ENCODE measurements at regions of chr2 and their contacts with region 1.

Region 1: DNA sequence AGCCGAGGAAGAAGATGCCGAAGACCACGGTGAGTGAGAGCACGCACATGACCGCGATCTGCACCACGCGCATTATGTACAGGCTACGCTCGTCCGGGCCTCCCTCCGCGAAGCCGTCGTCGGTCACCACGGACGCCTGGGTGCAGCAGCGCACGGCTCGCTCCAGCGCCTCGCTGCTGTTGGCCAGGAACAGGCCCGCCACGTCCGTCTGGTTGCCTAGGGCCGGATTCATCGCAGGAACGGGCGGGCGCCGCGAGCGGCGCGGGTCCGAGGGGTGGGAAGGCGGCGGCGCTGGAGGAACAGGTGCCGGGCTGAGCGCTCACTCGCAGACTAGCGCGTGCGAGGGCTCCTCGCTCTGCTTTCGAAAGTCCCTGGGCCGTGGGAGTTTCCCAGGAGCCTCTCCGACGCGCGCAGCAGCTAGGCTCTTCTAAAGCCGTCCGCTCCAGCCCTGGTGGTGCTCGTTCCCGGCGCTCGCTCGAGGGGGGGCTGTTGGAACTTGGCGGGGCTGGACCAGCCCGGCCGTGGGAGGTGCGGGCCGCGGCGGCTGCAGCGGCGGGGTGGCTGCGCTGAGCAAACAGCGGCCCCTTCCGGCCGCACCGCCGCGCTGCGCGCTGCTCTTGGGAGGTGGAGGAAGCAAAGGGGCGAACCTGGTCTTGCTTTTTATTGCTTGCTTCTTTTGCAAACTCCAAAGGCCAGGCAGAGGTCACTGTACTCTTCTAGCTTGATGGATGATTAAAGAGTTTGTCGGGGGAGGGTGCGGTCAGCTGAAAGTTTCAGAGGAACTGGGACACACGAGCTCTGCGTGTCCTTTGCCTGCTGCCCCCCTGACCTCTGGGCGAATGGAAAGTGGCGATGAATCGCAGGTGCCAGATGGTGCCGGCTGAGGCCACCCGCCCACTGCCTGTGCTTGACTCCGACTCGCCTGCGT is at the start of gene RPRM:
- DNase-seq: peak; percentile 93
- H3K4me3 ChIP-seq: peak within 1 kb of the TSS; percentile 56 to 68 (median 60)
- H3K27ac ChIP-seq: peak within 1 kb of the TSS; percentile 79 to 82 (median 80)
- H3K4me1 ChIP-seq: peaks cover 0 to 45% (median 33%) of the 10 kb centered on the region in 4 donors
- H3K27me3 ChIP-seq: peaks cover 0 to 4% (median 0%) of the 10 kb centered on the region in 3 donors
- CTCF ChIP-seq: peak; percentile 28 to 85 (median 72)
- EP300 ChIP-seq: no peak
- POLR2A ChIP-seq: no peak
- total RNA-seq, gene RPRM: 17.4 to 35.7 (median 27.3) TPM

Region 2: DNA sequence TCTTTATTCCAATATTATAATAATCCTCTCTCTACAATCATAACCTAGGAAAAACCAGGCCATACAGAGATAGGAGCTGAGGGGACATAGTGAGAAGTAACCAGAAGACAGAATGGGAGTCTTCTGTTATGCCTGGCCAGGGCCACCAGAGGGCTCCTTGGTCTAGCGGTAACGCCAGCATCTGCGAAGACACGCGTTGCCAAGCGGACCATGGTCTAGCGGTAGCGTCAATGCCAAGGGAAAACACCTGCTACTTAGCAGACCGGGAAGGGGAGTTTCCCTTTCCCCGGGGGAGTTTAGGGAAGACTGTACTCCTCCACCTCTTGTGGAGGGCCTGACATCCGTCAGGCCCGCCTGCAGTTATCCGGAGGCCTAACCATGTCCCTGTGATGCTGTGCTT is 723.6 kb before region 1 on chr2:
- intact Hi-C with region 1: loop called (anchors 5 kb)
- DNase-seq: no peak
- H3K4me3 ChIP-seq: no peak overlapping the region
- H3K27ac ChIP-seq: no peak overlapping the region
- H3K4me1 ChIP-seq: no peaks in the 10 kb centered on the region
- H3K27me3 ChIP-seq: no peaks in the 10 kb centered on the region
- CTCF ChIP-seq: peak in 2 of 4 experiments; percentile 24 to 38
- EP300 ChIP-seq: no peak
- POLR2A ChIP-seq: no peak

Region 3: DNA sequence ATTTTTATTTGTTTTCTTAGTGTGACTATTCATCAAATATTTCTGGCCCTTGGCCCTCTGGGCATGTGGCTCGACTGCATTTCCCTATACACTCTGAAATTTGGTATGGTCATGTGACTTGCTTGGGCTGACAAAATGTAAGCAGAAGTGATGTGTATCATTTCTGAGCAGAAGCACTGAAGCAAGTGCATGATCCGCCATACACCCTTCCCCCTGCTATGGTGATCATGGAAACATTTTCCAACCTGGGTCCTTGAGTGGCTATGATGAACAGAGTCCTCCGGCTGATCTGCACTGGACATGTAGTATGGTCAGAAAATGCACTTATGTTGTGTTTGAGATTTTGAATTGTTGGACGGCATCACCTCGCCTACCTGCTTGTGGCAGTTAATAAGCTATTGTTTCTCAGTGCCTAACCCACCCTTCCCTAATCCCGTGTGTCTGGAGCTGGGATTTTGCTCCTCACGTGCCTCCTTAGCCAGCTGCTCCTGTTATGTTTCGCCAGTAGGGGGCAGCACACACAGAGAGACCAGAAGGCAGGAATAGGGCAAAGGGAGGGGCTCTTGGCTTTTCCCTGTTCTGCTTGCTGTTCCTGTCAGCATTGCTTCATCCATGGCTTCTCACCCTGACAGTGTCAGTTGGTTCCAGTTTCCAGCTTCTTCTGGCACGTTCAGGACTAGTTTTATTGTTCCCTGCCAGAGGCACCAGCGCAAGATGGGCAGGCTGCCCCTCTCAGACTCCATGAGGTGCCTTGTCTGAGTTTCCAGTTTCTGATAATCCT is 552.9 kb before region 1 on chr2:
- intact Hi-C with region 1: loop called (anchors 2 kb)
- DNase-seq: peak; percentile 84
- H3K4me3 ChIP-seq: no peak overlapping the region
- H3K27ac ChIP-seq: no peak overlapping the region
- H3K4me1 ChIP-seq: peaks cover 0 to 16% (median 0%) of the 10 kb centered on the region in 4 donors
- H3K27me3 ChIP-seq: no peaks in the 10 kb centered on the region
- CTCF ChIP-seq: peak; percentile 53 to 69 (median 58)
- EP300 ChIP-seq: no peak
- POLR2A ChIP-seq: no peak

Region 4: DNA sequence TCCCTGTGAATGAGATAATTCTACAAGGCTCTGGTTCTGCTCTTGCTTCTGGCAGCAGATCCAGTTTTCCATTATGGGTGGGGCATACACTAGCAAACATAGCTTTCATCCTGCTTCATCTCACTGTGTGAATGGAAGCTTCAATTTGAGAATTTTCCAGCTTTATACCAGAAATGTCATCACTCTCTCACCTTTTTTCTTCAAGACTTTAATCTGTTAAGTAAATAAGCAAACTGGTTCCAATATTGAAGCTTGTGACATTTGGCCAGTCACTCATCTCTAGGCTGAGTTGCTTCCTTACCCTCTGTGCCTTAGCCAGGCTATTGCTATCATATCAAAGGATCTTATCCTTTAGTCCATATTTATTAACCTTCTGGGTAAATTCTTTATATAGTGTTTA is 249.6 kb before region 1 on chr2:
- intact Hi-C with region 1: loop called (anchors 5 kb)
- DNase-seq: no peak
- H3K4me3 ChIP-seq: no peak overlapping the region
- H3K27ac ChIP-seq: no peak overlapping the region
- H3K4me1 ChIP-seq: peaks cover 0 to 8% (median 0%) of the 10 kb centered on the region in 4 donors
- H3K27me3 ChIP-seq: no peaks in the 10 kb centered on the region
- CTCF ChIP-seq: no peak
- EP300 ChIP-seq: no peak
- POLR2A ChIP-seq: no peak

Region 5: GRCh38 chr2:153443106-153443505 is 35.5 kb before region 1 on chr2:
- intact Hi-C with region 1: no loop called
- DNase-seq: no peak
- H3K4me3 ChIP-seq: no peak overlapping the region
- H3K27ac ChIP-seq: no peak overlapping the region
- H3K4me1 ChIP-seq: no peaks in the 10 kb centered on the region
- H3K27me3 ChIP-seq: no peaks in the 10 kb centered on the region
- CTCF ChIP-seq: no peak
- EP300 ChIP-seq: no peak
- POLR2A ChIP-seq: no peak